Activated naive CD8-positive, alpha-beta T cell treated with anti-CD3 and anti-CD28 coated beads, Interleukin-2, amount 10 ng/mL, durations not matched to agents 7 days and 5 days (primary cell): ENCODE measurements at regions of chr6 and their contacts with region 1.

Region 1: GRCh38 chr6:26196846-26197648 is 109.8 kb downstream of the HFE start:
- DNase-seq: peak; percentile 83
- ATAC-seq: peak; percentile 44
- H3K4me3 Mint-ChIP-seq: peak overlapping the region; percentile 87
- H3K27ac Mint-ChIP-seq: peak overlapping the region; percentile 96
- H3K4me1 Mint-ChIP-seq: peaks cover 48% of the 10 kb centered on the region
- H3K27me3 Mint-ChIP-seq: no peaks in the 10 kb centered on the region

Region 2: GRCh38 chr6:26103770-26104456 is 93.1 kb before region 1 on chr6:
- POLR2A ChIA-PET with region 1: interaction called, 36 read pairs
- DNase-seq: peak; percentile 86
- ATAC-seq: peak; percentile 89
- H3K4me3 Mint-ChIP-seq: peak overlapping the region; percentile 93
- H3K27ac Mint-ChIP-seq: peak overlapping the region; percentile 100
- H3K4me1 Mint-ChIP-seq: peaks cover 18% of the 10 kb centered on the region
- H3K27me3 Mint-ChIP-seq: no peaks in the 10 kb centered on the region

Region 3: DNA sequence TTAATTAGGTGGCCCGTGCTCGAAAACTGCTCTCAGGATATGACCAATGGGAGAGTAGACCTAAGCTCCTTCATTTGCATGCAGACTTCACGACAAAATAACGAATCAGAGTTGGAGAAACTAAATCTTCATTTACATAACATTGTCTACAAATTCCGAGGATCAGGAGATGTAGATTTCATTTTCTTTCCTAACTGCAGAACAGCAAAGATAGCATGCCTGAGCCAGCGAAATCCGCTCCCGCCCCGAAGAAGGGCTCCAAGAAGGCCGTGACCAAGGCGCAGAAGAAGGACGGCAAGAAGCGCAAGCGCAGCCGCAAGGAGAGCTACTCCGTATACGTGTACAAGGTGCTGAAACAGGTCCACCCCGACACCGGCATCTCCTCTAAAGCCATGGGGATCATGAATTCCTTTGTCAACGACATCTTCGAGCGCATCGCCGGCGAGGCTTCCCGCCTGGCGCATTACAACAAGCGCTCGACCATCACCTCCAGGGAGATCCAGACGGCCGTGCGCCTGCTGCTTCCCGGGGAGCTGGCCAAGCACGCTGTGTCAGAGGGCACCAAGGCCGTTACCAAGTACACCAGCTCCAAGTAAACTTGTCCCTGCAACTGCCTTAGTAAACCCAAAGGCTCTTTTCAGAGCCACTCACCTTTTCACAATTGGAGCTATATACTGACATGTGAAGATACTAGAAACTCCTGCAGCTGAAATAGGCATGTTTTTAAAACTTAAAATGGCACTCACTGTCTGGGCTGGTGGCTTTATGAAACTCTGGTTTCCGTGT is 13.3 kb before region 1 on chr6:
- POLR2A ChIA-PET with region 1: interaction called, 655 read pairs
- DNase-seq: peak; percentile 78
- ATAC-seq: peak; percentile 85
- H3K4me3 Mint-ChIP-seq: peak overlapping the region; percentile 96
- H3K27ac Mint-ChIP-seq: peak overlapping the region; percentile 99
- H3K4me1 Mint-ChIP-seq: peaks cover 48% of the 10 kb centered on the region
- H3K27me3 Mint-ChIP-seq: no peaks in the 10 kb centered on the region

Region 4: GRCh38 chr6:27838058-27838944 is 1641.3 kb after region 1 on chr6:
- POLR2A ChIA-PET with region 1: interaction called, 11 read pairs
- DNase-seq: peak; percentile 84
- ATAC-seq: peak; percentile 74
- H3K4me3 Mint-ChIP-seq: no peak overlapping the region
- H3K27ac Mint-ChIP-seq: no peak overlapping the region
- H3K4me1 Mint-ChIP-seq: peaks cover 26% of the 10 kb centered on the region
- H3K27me3 Mint-ChIP-seq: peaks cover 2% of the 10 kb centered on the region

Region 5: DNA sequence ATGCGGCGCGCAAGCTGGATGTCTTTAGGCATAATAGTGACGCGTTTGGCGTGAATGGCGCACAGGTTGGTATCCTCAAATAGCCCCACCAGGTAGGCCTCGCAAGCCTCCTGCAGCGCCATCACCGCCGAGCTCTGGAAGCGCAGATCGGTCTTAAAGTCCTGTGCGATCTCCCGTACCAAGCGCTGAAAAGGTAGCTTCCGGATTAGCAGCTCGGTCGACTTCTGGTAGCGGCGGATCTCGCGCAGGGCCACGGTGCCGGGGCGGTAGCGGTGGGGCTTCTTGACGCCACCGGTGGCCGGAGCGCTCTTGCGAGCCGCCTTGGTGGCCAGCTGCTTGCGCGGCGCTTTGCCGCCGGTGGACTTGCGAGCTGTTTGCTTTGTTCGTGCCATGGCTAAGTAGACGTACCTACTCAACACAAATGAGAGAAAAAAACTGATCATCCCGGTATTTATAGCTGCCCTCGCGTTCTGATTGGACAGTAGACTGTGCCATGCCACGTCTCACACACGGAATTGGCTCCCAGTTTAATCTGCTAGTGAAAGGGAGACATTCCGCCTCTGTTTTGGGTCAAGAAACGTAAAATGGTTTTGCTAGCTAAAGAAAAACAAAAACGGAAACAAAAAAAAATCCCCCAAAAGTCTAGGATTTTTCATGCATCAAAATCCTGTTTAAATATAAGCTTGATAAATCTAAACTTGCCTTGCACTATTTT is 1675.0 kb after region 1 on chr6:
- POLR2A ChIA-PET with region 1: interaction called, 84 read pairs
- DNase-seq: peak; percentile 80
- ATAC-seq: peak; percentile 63
- H3K4me3 Mint-ChIP-seq: peak overlapping the region; percentile 92
- H3K27ac Mint-ChIP-seq: peak overlapping the region; percentile 93
- H3K4me1 Mint-ChIP-seq: peaks cover 44% of the 10 kb centered on the region
- H3K27me3 Mint-ChIP-seq: no peaks in the 10 kb centered on the region